ENCODE measurements at regions of chr2 and their contacts with region 1.

Region 1: DNA sequence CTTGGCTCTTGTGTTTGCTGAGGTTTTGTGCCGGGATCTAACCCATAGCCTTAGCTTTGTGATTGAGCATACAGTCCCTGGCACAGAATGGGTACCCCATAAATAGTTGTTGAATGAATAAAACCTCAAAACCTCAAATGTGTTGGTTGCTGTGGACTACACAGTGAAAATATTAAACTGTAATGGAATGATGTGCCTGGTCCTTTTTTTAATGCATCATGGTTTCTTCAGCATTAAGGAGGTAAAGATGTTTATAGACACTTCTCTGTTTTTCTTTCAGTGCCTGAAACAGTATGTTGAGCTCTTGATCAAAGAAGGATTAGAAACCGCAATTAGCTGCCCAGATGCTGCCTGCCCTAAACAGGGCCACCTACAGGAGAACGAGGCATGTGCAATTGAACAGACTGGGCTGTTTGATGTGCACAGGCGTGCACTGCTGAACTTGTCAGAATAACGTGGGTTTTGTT is 97.0 kb downstream of the RNF144A start:
- DNase-seq: peak; percentile 56 to 80 (median 75)
- H3K4me3 ChIP-seq: no peak overlapping the region
- H3K27ac ChIP-seq: no peak overlapping the region
- H3K4me1 ChIP-seq: peaks cover 10 to 40% (median 27%) of the 10 kb centered on the region in 4 experiments
- H3K27me3 ChIP-seq: no peaks in the 10 kb centered on the region

Region 2: GRCh38 chr2:6993229-6993640 is 21.0 kb before region 1 on chr2:
- CTCF ChIA-PET with region 1: interaction called, 16 read pairs
- POLR2A ChIA-PET with region 1: no interaction called
- DNase-seq: no peak
- H3K4me3 ChIP-seq: no peak overlapping the region
- H3K27ac ChIP-seq: no peak overlapping the region
- H3K4me1 ChIP-seq: peaks cover 0 to 13% (median 7%) of the 10 kb centered on the region in 4 experiments
- H3K27me3 ChIP-seq: no peaks in the 10 kb centered on the region

Region 3: GRCh38 chr2:6999211-6999877 is 14.9 kb before region 1 on chr2:
- CTCF ChIA-PET with region 1: interaction called, 16 read pairs
- POLR2A ChIA-PET with region 1: interaction called, 3 read pairs
- DNase-seq: peak in 2 of 3 donors; percentile 48 to 50
- H3K4me3 ChIP-seq: no peak overlapping the region
- H3K27ac ChIP-seq: no peak overlapping the region
- H3K4me1 ChIP-seq: peaks cover 4 to 21% (median 15%) of the 10 kb centered on the region in 4 experiments
- H3K27me3 ChIP-seq: no peaks in the 10 kb centered on the region

Region 4: GRCh38 chr2:7026742-7027141 is 12.5 kb after region 1 on chr2:
- CTCF ChIA-PET with region 1: interaction called, 18 read pairs
- POLR2A ChIA-PET with region 1: no interaction called
- DNase-seq: no peak
- H3K4me3 ChIP-seq: no peak overlapping the region
- H3K27ac ChIP-seq: no peak overlapping the region
- H3K4me1 ChIP-seq: peaks cover 0 to 29% (median 7%) of the 10 kb centered on the region in 4 experiments
- H3K27me3 ChIP-seq: no peaks in the 10 kb centered on the region

Region 5: GRCh38 chr2:7111626-7112025 is 97.4 kb after region 1 on chr2:
- CTCF ChIA-PET with region 1: no interaction called
- POLR2A ChIA-PET with region 1: no interaction called
- DNase-seq: peak in 2 of 3 donors; percentile 38 to 43
- H3K4me3 ChIP-seq: no peak overlapping the region
- H3K27ac ChIP-seq: no peak overlapping the region
- H3K4me1 ChIP-seq: peaks cover 0 to 7% (median 0%) of the 10 kb centered on the region in 4 experiments
- H3K27me3 ChIP-seq: no peaks in the 10 kb centered on the region